HCT116 (cell line): ENCODE measurements at regions of chr15 and their contacts with region 1.

Region 1: GRCh38 chr15:34927726-34928125 is 41.8 kb downstream of the AQR start:
- DNase-seq: no peak
- ATAC-seq: no peak
- H3K4me3 ChIP-seq: no peak overlapping the region
- H3K27ac ChIP-seq: no peak overlapping the region
- H3K4me1 ChIP-seq: no peaks in the 10 kb centered on the region
- H3K27me3 ChIP-seq: no peaks in the 10 kb centered on the region
- CTCF ChIP-seq: no peak
- POLR2A ChIP-seq: no peak
- RAD21 ChIP-seq: no peak

Region 2: GRCh38 chr15:34065941-34066340 is 861.8 kb before region 1 on chr15:
- CTCF ChIA-PET with region 1: no interaction called
- POLR2A ChIA-PET with region 1: no interaction called
- RAD21 ChIA-PET with region 1: no interaction called
- intact Hi-C with region 1: loop called (anchors 5 kb)
- DNase-seq: no peak
- ATAC-seq: no peak
- H3K4me3 ChIP-seq: no peak overlapping the region
- H3K27ac ChIP-seq: no peak overlapping the region
- H3K4me1 ChIP-seq: no peaks in the 10 kb centered on the region
- H3K27me3 ChIP-seq: no peaks in the 10 kb centered on the region
- CTCF ChIP-seq: no peak
- POLR2A ChIP-seq: no peak
- RAD21 ChIP-seq: no peak

Region 3: DNA sequence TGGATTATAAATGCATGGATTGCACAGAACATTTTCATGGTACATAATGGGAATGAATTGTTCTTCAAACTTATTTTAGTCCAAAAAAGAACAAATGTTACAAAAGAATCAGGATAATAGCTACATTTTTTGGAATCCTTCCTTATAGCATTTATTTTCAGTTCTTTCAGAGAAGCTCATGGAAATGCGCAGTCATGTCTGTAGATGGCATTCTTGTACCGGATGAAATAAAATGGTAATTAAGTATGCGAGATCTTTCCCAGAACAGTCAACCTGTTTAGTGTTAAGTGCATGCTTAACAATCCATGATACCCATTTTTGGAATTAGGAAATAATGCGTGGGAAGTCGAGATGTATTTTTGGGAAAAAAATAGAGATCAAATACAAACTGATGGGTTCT is 306.1 kb before region 1 on chr15:
- CTCF ChIA-PET with region 1: interaction called, 56 read pairs
- POLR2A ChIA-PET with region 1: no interaction called
- RAD21 ChIA-PET with region 1: no interaction called
- intact Hi-C with region 1: no loop called
- DNase-seq: peak; percentile 13
- ATAC-seq: peak; percentile 58
- H3K4me3 ChIP-seq: no peak overlapping the region
- H3K27ac ChIP-seq: no peak overlapping the region
- H3K4me1 ChIP-seq: 0 out of 4 replicates have a peak, but pooled peaks cover 0 to 1% of the 10 kb centered on the region in 2 experiments
- H3K27me3 ChIP-seq: peaks cover 30% of the 10 kb centered on the region; the same call in 1 of the 2 replicates
- CTCF ChIP-seq: peak; percentile 17 to 63 (median 32); a peak in 4 of 6 replicates
- POLR2A ChIP-seq: no peak
- RAD21 ChIP-seq: peak; percentile 60

Region 4: GRCh38 chr15:34944936-34945335 is 17.2 kb after region 1 on chr15:
- CTCF ChIA-PET with region 1: no interaction called
- POLR2A ChIA-PET with region 1: no interaction called
- RAD21 ChIA-PET with region 1: no interaction called
- intact Hi-C with region 1: loop called (anchors 2 kb)
- DNase-seq: no peak
- ATAC-seq: no peak
- H3K4me3 ChIP-seq: no peak overlapping the region
- H3K27ac ChIP-seq: no peak overlapping the region
- H3K4me1 ChIP-seq: no peaks in the 10 kb centered on the region
- H3K27me3 ChIP-seq: no peaks in the 10 kb centered on the region
- CTCF ChIP-seq: no peak
- POLR2A ChIP-seq: no peak
- RAD21 ChIP-seq: no peak